ENCODE measurements at regions of chr3 and their contacts with region 1.

Region 1: DNA sequence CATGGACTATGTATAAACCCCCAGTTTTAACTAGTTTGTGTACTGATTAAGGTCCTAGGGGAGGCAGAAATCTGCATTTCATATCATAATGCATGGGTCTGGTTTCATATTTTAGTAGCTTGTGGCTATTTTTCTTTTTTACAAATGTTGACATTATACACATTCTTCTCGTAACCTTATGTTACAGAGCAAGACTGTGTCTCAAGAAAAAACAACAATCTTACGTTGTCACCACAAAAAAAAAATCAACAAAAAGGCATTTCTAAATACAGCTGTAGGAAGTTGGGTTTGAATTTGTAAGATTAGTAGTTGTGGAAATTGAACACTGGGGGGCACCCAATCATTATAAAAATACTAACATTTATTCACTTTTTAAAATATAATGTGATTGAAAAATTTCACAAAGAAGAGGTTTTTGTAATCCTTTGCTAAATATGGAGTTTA is 17.9 kb downstream of the SERP1 start:
- DNase-seq: peak in 4 of 14 experiments; percentile 14 to 55 (median 41)
- ATAC-seq: peak; percentile 48
- H3K4me3 ChIP-seq: no peak overlapping the region
- H3K4me3 Mint-ChIP-seq: no peak overlapping the region
- H3K27ac ChIP-seq: no peak overlapping the region
- H3K27ac Mint-ChIP-seq: no peak overlapping the region
- H3K4me1 ChIP-seq: no peaks in the 10 kb centered on the region
- H3K4me1 Mint-ChIP-seq: peaks cover 4% of the 10 kb centered on the region
- H3K27me3 ChIP-seq: no peaks in the 10 kb centered on the region
- H3K27me3 Mint-ChIP-seq: no peaks in the 10 kb centered on the region
- CTCF ChIP-seq: peak; percentile 58

Region 2: DNA sequence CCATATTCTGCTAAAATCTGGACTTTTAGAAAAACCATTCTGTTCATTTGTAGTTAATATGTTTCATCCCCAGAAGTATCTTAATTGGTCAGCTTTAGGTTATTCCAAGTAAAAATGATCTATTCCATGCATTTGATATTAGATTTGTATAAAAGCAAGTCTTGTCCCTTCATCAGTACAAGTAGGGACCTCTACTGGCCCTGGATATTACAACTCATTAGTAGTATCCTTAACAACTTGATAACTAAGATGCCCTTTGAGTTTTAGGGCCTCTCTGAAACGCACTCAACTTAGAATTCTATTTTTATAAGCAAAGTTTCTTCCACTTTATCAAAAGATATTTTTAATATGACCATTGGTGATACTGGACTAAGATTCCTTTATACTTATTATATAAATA is 49.5 kb after region 1 on chr3:
- CTCF ChIA-PET with region 1: no interaction called
- POLR2A ChIA-PET with region 1: no interaction called
- intact Hi-C with region 1: loop called in 1 of 2 experiments (anchors 5 kb)
- DNase-seq: no peak
- ATAC-seq: no peak
- H3K4me3 ChIP-seq: no peak overlapping the region
- H3K4me3 Mint-ChIP-seq: no peak overlapping the region
- H3K27ac ChIP-seq: no peak overlapping the region
- H3K27ac Mint-ChIP-seq: no peak overlapping the region
- H3K4me1 ChIP-seq: peaks cover 5% of the 10 kb centered on the region
- H3K4me1 Mint-ChIP-seq: peaks cover 34% of the 10 kb centered on the region
- H3K27me3 ChIP-seq: no peaks in the 10 kb centered on the region
- H3K27me3 Mint-ChIP-seq: no peaks in the 10 kb centered on the region
- CTCF ChIP-seq: no peak

Region 3: GRCh38 chr3:150870396-150870795 is 342.0 kb after region 1 on chr3:
- CTCF ChIA-PET with region 1: no interaction called
- POLR2A ChIA-PET with region 1: no interaction called
- intact Hi-C with region 1: loop called (anchors 1 to 2 kb)
- DNase-seq: no peak
- ATAC-seq: no peak
- H3K4me3 ChIP-seq: no peak overlapping the region
- H3K4me3 Mint-ChIP-seq: no peak overlapping the region
- H3K27ac ChIP-seq: no peak overlapping the region
- H3K27ac Mint-ChIP-seq: no peak overlapping the region
- H3K4me1 ChIP-seq: no peaks in the 10 kb centered on the region
- H3K4me1 Mint-ChIP-seq: peaks cover 2% of the 10 kb centered on the region
- H3K27me3 ChIP-seq: no peaks in the 10 kb centered on the region
- H3K27me3 Mint-ChIP-seq: peaks cover 14% of the 10 kb centered on the region
- CTCF ChIP-seq: no peak

Region 4: DNA sequence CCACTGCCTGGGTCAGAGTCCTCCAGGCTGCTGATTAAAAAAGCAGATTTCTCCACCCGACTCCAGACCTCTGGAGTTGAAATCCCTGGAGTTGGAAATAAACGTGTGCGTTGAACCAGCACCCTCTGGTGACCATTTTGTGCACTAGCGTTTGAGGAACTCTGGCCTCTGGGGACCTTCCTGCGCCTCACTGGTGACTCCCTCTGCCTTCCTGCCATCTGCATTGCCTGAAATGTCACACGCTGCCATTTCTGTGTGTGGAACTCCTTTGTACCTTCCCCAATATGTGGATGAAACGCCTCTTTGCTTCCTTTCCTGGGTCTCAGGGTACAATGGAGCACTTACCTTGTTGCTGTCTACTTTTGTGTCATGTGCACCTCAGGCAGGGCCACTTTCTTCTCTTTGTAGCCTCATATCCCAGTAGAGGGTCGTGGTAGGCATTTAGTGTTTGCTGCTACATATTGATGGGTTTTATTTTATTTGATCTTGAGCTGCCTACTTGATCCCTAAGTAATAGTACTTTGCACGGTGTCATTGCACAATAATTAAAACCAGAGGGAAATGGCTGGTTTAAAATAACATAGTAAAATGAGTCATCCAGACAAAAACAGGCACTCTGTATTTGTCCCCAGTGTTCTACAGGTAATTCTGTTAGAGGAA is 617.8 kb after region 1 on chr3:
- CTCF ChIA-PET with region 1: no interaction called
- POLR2A ChIA-PET with region 1: no interaction called
- intact Hi-C with region 1: loop called (anchors 2 to 5 kb)
- DNase-seq: peak in 12 of 14 experiments; percentile 23 to 78 (median 45)
- ATAC-seq: peak; percentile 98
- H3K4me3 ChIP-seq: no peak overlapping the region
- H3K4me3 Mint-ChIP-seq: no peak overlapping the region
- H3K27ac ChIP-seq: no peak overlapping the region
- H3K27ac Mint-ChIP-seq: no peak overlapping the region
- H3K4me1 ChIP-seq: peaks cover 8% of the 10 kb centered on the region
- H3K4me1 Mint-ChIP-seq: no peaks in the 10 kb centered on the region
- H3K27me3 ChIP-seq: no peaks in the 10 kb centered on the region
- H3K27me3 Mint-ChIP-seq: peaks cover 6% of the 10 kb centered on the region
- CTCF ChIP-seq: peak; percentile 89